ENCODE measurements at regions of chr18 and their contacts with region 1.

Region 1: GRCh38 chr18:36558234-36558633 is 260.7 kb downstream of the FHOD3 start:
- DNase-seq: no peak
- H3K4me3 ChIP-seq: no peak overlapping the region
- H3K27ac ChIP-seq: no peak overlapping the region
- H3K4me1 ChIP-seq: no peaks in the 10 kb centered on the region
- H3K27me3 ChIP-seq: peaks cover 4% of the 10 kb centered on the region
- CTCF ChIP-seq: no peak

Region 2: GRCh38 chr18:36149514-36150289 is 408.5 kb before region 1 on chr18:
- CTCF ChIA-PET with region 1: no interaction called
- POLR2A ChIA-PET with region 1: no interaction called
- intact Hi-C with region 1: no loop called
- DNase-seq: no peak
- H3K4me3 ChIP-seq: no peak overlapping the region
- H3K27ac ChIP-seq: no peak overlapping the region
- H3K4me1 ChIP-seq: no peaks in the 10 kb centered on the region
- H3K27me3 ChIP-seq: no peaks in the 10 kb centered on the region
- CTCF ChIP-seq: no peak

Region 3: DNA sequence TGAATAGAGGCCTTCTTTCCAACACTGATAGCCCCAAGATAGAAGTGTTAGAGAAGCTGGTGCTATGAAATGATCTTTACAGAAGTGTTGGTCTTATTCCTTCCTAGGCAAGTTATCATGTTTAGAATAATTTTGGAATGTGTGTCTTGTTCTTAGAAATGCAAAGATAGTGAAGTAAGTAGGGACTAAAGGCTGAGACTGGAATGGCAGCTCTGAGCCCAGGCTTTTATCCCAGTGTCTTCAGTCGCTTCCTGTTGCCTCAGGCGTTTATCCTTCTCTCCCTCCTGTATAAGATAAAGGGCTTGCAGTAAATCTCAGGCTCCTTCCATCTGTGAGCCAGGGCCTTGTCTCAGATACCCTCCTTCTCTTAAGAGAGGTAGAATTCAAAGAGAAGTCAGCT is 52.4 kb after region 1 on chr18:
- CTCF ChIA-PET with region 1: no interaction called
- POLR2A ChIA-PET with region 1: no interaction called
- intact Hi-C with region 1: loop called (anchors 10 kb)
- DNase-seq: no peak
- H3K4me3 ChIP-seq: no peak overlapping the region
- H3K27ac ChIP-seq: no peak overlapping the region
- H3K4me1 ChIP-seq: no peaks in the 10 kb centered on the region
- H3K27me3 ChIP-seq: no peaks in the 10 kb centered on the region
- CTCF ChIP-seq: no peak

Region 4: DNA sequence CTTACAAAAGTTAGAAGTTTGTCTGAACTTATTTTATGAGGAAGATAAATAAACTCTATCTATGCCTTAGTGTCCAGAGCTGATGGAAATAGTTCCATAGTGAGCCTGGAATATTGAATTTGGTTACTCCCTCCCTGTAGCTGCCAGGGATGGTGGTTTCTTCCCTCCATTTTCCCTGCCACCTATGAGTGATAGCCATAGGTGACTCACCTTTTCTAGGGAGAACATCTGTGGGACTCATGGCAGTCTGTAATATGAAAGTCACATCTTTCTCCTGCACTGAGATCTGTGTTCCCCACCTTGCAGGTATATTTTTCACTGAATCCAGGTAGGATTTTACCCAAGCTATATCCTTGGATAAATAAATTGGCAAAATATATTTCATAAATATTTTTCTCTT is 121.8 kb after region 1 on chr18:
- CTCF ChIA-PET with region 1: no interaction called
- POLR2A ChIA-PET with region 1: no interaction called
- intact Hi-C with region 1: no loop called
- DNase-seq: no peak
- H3K4me3 ChIP-seq: no peak overlapping the region
- H3K27ac ChIP-seq: no peak overlapping the region
- H3K4me1 ChIP-seq: no peaks in the 10 kb centered on the region
- H3K27me3 ChIP-seq: peaks cover 8% of the 10 kb centered on the region
- CTCF ChIP-seq: no peak

Region 5: GRCh38 chr18:38019292-38019691 is 1461.1 kb after region 1 on chr18:
- CTCF ChIA-PET with region 1: no interaction called
- POLR2A ChIA-PET with region 1: no interaction called
- intact Hi-C with region 1: no loop called
- DNase-seq: no peak
- H3K4me3 ChIP-seq: no peak overlapping the region
- H3K27ac ChIP-seq: no peak overlapping the region
- H3K4me1 ChIP-seq: no peaks in the 10 kb centered on the region
- H3K27me3 ChIP-seq: no peaks in the 10 kb centered on the region
- CTCF ChIP-seq: no peak